Naive thymus-derived CD4-positive, alpha-beta T cell (primary cell): ENCODE measurements at regions of chr3 and their contacts with region 1.

Region 1: GRCh38 chr3:150870396-150870795 is 34.8 kb downstream of the MINDY4B start:
- DNase-seq: no peak
- ATAC-seq: no peak
- H3K4me3 ChIP-seq: no peak overlapping the region
- H3K4me3 Mint-ChIP-seq: no peak overlapping the region
- H3K27ac ChIP-seq: no peak overlapping the region
- H3K27ac Mint-ChIP-seq: no peak overlapping the region
- H3K4me1 ChIP-seq: no peaks in the 10 kb centered on the region
- H3K4me1 Mint-ChIP-seq: peaks cover 0 to 3% (median 0%) of the 10 kb centered on the region in 7 donors
- H3K27me3 ChIP-seq: no peaks in the 10 kb centered on the region
- H3K27me3 Mint-ChIP-seq: peaks cover 4 to 17% (median 12%) of the 10 kb centered on the region in 5 donors

Region 2: GRCh38 chr3:150528354-150528797 is 342.0 kb before region 1 on chr3:
- CTCF ChIA-PET with region 1: interaction called, 3 read pairs
- POLR2A ChIA-PET with region 1: no interaction called
- intact Hi-C with region 1: loop called (anchors 1 kb)
- DNase-seq: peak in 4 of 9 donors; percentile 23 to 37 (median 28)
- ATAC-seq: peak; percentile 42
- H3K4me3 ChIP-seq: no peak overlapping the region
- H3K4me3 Mint-ChIP-seq: no peak overlapping the region
- H3K27ac ChIP-seq: no peak overlapping the region
- H3K27ac Mint-ChIP-seq: no peak overlapping the region
- H3K4me1 ChIP-seq: no peaks in the 10 kb centered on the region
- H3K4me1 Mint-ChIP-seq: peaks cover 0 to 8% (median 5%) of the 10 kb centered on the region in 7 donors
- H3K27me3 ChIP-seq: no peaks in the 10 kb centered on the region
- H3K27me3 Mint-ChIP-seq: peaks cover 0 to 21% (median 0%) of the 10 kb centered on the region in 5 donors

Region 3: DNA sequence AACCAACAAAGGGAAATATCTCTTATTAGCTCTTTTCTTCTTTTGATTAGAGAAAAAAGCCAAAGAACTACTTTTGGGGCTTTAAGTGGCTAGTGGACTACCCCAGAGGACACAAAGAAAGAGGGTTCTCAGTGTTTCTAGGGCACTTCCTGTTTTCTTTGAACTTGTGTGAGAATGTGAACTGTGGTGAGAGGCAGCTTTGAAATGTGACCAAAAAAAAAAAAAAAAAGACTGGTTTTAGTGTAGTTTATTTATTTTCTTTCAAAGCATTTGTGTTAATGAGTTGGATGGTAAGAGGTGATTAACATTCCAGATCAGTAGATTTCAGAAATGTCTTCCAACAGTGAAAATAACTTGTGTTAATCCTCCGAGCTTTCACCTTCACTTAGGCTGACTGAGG is 234.9 kb before region 1 on chr3:
- CTCF ChIA-PET with region 1: no interaction called
- POLR2A ChIA-PET with region 1: no interaction called
- intact Hi-C with region 1: loop called in 1 of 2 experiments (anchors 10 kb)
- DNase-seq: peak in 4 of 9 donors; percentile 7 to 19 (median 10)
- ATAC-seq: peak; percentile 83
- H3K4me3 ChIP-seq: no peak overlapping the region
- H3K4me3 Mint-ChIP-seq: peak overlapping the region in 9 of 10 donors; percentile 6 to 64 (median 37)
- H3K27ac ChIP-seq: no peak overlapping the region
- H3K27ac Mint-ChIP-seq: peak overlapping the region in 7 of 9 donors; percentile 12 to 79 (median 41)
- H3K4me1 ChIP-seq: peaks cover 12 to 13% of the 10 kb centered on the region in 2 donors
- H3K4me1 Mint-ChIP-seq: peaks cover 10 to 34% (median 27%) of the 10 kb centered on the region in 7 donors
- H3K27me3 ChIP-seq: no peaks in the 10 kb centered on the region
- H3K27me3 Mint-ChIP-seq: no peaks in the 10 kb centered on the region

Region 4: DNA sequence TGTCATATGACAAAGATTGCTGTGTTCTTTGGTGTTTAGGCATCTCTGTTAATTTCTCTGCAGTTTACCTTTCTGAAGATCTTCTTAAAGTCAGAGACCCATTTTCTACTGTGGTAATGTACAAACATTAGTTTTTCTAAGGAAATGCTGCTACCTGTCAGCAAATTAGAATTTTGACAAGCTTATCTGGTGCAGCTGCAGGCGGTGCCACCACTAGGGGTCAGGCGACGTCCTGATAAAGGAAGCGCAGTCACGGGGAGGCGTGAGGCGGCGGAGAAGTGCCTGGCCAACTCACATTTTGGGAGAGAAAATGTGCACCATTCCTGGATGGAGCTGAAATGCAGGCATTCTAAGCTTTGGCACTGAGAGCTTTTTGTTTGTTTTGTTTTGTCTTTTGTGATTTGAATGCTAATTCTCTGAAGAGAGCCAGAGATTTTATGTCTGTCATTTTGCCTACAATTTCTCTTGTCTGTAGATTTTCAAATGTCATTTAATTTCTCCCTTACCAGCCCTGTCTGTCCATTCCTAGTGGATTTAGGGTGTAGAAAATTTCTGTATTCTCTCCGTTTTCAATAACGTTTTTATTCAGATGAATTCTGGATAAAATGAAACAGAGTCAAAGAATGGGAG is 82.5 kb before region 1 on chr3:
- CTCF ChIA-PET with region 1: no interaction called
- POLR2A ChIA-PET with region 1: no interaction called
- intact Hi-C with region 1: loop called (anchors 1 kb)
- DNase-seq: peak; percentile 45 to 77 (median 63)
- ATAC-seq: peak; percentile 92
- H3K4me3 ChIP-seq: no peak overlapping the region
- H3K4me3 Mint-ChIP-seq: peak overlapping the region in 2 of 10 donors; percentile 24 to 50
- H3K27ac ChIP-seq: no peak overlapping the region
- H3K27ac Mint-ChIP-seq: no peak overlapping the region
- H3K4me1 ChIP-seq: no peaks in the 10 kb centered on the region
- H3K4me1 Mint-ChIP-seq: peaks cover 0 to 22% (median 4%) of the 10 kb centered on the region in 7 donors
- H3K27me3 ChIP-seq: no peaks in the 10 kb centered on the region
- H3K27me3 Mint-ChIP-seq: peaks cover 0 to 9% (median 4%) of the 10 kb centered on the region in 5 donors

Region 5: DNA sequence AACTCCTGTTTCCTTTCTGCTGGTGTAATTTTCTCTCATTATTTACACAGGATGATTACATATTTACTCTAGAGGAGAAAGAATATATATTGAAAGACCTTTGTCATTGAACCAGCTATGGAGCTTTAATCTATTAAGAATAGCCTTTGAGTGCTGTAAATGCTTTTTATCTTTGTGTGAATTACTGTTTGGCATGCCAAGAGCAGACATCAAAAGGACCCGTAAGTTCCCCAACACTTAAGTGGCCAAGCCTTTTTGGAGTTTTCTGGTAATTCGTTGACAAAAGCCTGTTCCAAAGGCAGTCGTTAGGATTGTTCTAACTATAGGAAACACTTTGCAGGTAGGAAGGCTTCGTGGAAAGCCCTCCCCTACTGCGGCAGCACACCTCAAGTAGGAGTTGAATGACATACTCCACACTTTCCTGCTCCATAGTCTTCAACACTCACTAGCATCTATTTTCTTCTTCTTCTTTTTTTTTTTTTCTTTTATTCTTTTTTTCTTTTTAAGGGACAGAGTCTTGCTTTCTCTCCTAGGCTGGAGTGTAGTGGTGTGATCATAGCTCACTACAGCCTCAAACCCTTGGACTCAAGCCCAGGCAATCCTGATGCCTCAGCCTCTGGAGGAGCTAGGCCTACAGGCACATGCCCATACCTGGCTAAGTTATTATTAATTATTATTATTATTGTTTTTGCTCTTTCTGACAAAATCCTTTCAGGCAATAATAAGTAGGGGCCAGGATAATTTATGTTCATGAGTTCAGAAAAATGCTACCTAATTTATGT is 1101.6 kb after region 1 on chr3:
- CTCF ChIA-PET with region 1: no interaction called
- POLR2A ChIA-PET with region 1: no interaction called
- intact Hi-C with region 1: no loop called
- DNase-seq: no peak
- ATAC-seq: no peak
- H3K4me3 ChIP-seq: no peak overlapping the region
- H3K4me3 Mint-ChIP-seq: no peak overlapping the region
- H3K27ac ChIP-seq: no peak overlapping the region
- H3K27ac Mint-ChIP-seq: no peak overlapping the region
- H3K4me1 ChIP-seq: no peaks in the 10 kb centered on the region
- H3K4me1 Mint-ChIP-seq: peaks cover 0 to 4% (median 0%) of the 10 kb centered on the region in 7 donors
- H3K27me3 ChIP-seq: no peaks in the 10 kb centered on the region
- H3K27me3 Mint-ChIP-seq: peaks cover 0 to 19% (median 0%) of the 10 kb centered on the region in 5 donors